Mammary epithelial cell (primary cell): ENCODE measurements at regions of chr6 and their contacts with region 1.

Region 1: DNA sequence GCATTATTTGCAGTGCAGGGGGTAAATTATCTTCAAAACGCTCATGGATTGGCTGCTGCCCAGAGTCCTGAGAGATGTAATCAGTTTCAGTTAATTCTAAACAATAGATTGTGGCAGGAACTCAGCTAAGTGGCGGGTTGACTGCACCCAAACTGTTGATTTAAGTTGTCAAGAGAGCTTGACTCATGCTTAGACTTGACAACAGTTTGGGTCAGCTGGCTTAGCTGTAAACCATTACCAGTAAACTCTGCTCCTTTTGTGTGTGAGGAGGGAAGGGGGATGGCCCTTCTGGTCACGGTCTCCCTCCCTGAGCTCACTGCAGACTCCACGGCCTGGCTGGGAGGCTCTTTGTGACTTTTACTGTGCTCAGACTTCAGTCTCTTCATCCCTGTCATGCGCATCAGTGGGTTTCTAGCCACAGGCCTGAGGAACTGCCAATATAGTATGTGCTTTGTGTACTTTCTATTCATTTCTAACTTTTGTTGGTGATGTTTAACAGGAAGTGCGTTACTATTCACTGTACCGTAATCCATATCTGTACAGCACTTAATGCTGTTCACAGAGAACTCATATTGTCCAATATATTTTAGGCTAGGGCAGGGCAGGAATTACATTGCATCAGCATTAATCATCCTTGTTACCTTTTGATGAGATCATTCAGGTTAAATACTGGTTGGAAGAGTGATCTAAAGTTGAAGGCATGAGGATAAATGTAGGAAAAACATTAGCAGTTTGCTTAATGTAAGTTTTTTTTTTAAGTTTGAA is 488.3 kb downstream of the CDKAL1 start:
- DNase-seq: peak; percentile 96
- H3K4me3 ChIP-seq: no peak overlapping the region
- H3K27ac ChIP-seq: peak overlapping the region; percentile 98
- H3K4me1 ChIP-seq: peaks cover 19% of the 10 kb centered on the region
- H3K27me3 ChIP-seq: no peaks in the 10 kb centered on the region
- CTCF ChIP-seq: no peak

Region 2: GRCh38 chr6:20630617-20631548 is 391.6 kb before region 1 on chr6:
- CTCF ChIA-PET with region 1: no interaction called
- dilution Hi-C with region 1: no loop called
- in situ Hi-C with region 1: no loop called
- intact Hi-C with region 1: no loop called
- DNase-seq: peak; percentile 15
- H3K4me3 ChIP-seq: no peak overlapping the region
- H3K27ac ChIP-seq: no peak overlapping the region
- H3K4me1 ChIP-seq: peaks cover 4% of the 10 kb centered on the region
- H3K27me3 ChIP-seq: no peaks in the 10 kb centered on the region
- CTCF ChIP-seq: no peak

Region 3: DNA sequence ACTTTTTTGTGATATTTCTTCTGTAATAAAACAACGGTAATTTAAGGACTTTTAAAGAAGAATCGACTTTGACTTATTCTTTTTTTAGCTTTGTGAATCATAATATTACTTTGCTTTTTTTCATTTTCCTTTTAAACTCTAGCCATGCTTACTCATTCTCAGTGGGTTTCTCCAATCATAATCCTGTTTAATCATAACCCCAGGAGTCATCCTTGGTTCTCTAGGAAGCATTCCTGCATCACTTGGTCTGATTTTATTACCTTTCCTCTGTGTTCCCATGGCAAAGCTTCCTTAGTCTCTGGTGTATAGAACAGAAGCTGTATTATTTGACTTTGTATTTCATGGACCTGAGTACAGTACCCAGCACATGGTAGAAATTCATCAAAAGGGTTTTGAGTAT is 264.8 kb before region 1 on chr6:
- CTCF ChIA-PET with region 1: no interaction called
- dilution Hi-C with region 1: no loop called
- in situ Hi-C with region 1: no loop called
- intact Hi-C with region 1: no loop called
- DNase-seq: peak; percentile 38
- H3K4me3 ChIP-seq: no peak overlapping the region
- H3K27ac ChIP-seq: no peak overlapping the region
- H3K4me1 ChIP-seq: peaks cover 3% of the 10 kb centered on the region
- H3K27me3 ChIP-seq: no peaks in the 10 kb centered on the region
- CTCF ChIP-seq: no peak

Region 4: DNA sequence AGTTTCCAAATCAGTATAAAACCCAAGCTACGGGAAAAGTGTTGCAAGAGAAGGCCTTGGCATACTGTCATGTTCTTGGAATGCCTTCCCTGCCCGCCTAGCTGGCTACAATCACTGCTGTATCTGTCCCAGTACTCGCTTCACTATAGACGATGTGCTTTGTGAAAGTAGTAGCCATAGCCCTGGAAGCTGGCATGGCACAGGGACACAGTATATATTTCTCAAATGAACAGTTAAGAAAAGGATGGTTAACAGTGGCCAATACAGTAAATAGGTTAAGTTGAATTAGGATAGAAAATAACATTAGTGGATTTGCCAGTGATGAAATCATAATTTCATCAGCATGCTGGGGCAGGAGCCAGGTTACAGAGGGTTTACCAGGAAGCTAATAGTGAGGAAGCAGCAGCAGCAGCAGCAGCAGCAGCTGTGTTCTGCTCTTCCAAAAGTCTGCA is 11.1 kb after region 1 on chr6:
- CTCF ChIA-PET with region 1: interaction called, 5 read pairs
- dilution Hi-C with region 1: no loop called
- in situ Hi-C with region 1: no loop called
- intact Hi-C with region 1: loop called (anchors 1 kb)
- DNase-seq: peak; percentile 83
- H3K4me3 ChIP-seq: peak overlapping the region; percentile 9 to 38 (median 25)
- H3K27ac ChIP-seq: peak overlapping the region; percentile 91
- H3K4me1 ChIP-seq: peaks cover 21% of the 10 kb centered on the region
- H3K27me3 ChIP-seq: no peaks in the 10 kb centered on the region
- CTCF ChIP-seq: no peak

Region 5: GRCh38 chr6:21227486-21227885 is 205.0 kb after region 1 on chr6:
- CTCF ChIA-PET with region 1: no interaction called
- dilution Hi-C with region 1: no loop called
- in situ Hi-C with region 1: no loop called
- intact Hi-C with region 1: loop called (anchors 1 kb)
- DNase-seq: peak; percentile 85
- H3K4me3 ChIP-seq: no peak overlapping the region
- H3K27ac ChIP-seq: peak overlapping the region; percentile 80
- H3K4me1 ChIP-seq: peaks cover 39% of the 10 kb centered on the region
- H3K27me3 ChIP-seq: no peaks in the 10 kb centered on the region
- CTCF ChIP-seq: peak in 1 of 2 donors; percentile 52

Region 6: DNA sequence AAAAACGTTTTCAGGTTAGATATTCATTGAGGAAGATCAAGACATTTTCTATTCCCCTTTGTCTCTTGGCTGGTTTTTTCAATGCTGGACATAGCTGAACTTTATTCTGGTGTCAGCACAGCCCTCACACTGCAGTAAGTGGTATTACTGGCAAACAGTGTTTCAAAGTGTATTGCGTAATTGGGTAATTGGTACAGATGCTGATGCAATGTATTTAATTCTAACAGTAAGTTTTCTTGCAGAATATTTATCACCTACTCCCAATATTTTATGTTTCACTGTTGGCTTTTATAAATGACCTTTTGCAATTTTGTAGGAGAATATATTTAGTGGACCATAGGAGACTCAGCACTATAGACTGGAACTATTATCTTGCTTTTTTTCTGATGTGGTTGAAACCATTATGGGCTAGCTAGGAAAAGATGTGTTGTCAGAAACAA is 283.4 kb after region 1 on chr6:
- CTCF ChIA-PET with region 1: no interaction called
- dilution Hi-C with region 1: no loop called
- in situ Hi-C with region 1: no loop called
- intact Hi-C with region 1: loop called (anchors 10 kb)
- DNase-seq: peak; percentile 40
- H3K4me3 ChIP-seq: no peak overlapping the region
- H3K27ac ChIP-seq: no peak overlapping the region
- H3K4me1 ChIP-seq: no peaks in the 10 kb centered on the region
- H3K27me3 ChIP-seq: no peaks in the 10 kb centered on the region
- CTCF ChIP-seq: peak; percentile 24 to 62

Region 7: GRCh38 chr6:21869085-21869771 is 846.7 kb after region 1 on chr6:
- CTCF ChIA-PET with region 1: no interaction called
- dilution Hi-C with region 1: no loop called
- in situ Hi-C with region 1: no loop called
- intact Hi-C with region 1: loop called (anchors 2 kb)
- DNase-seq: peak; percentile 97
- H3K4me3 ChIP-seq: no peak overlapping the region
- H3K27ac ChIP-seq: peak overlapping the region; percentile 62
- H3K4me1 ChIP-seq: peaks cover 28% of the 10 kb centered on the region
- H3K27me3 ChIP-seq: no peaks in the 10 kb centered on the region
- CTCF ChIP-seq: no peak